ENCODE measurements at regions of chr4 and their contacts with region 1.

Region 1: DNA sequence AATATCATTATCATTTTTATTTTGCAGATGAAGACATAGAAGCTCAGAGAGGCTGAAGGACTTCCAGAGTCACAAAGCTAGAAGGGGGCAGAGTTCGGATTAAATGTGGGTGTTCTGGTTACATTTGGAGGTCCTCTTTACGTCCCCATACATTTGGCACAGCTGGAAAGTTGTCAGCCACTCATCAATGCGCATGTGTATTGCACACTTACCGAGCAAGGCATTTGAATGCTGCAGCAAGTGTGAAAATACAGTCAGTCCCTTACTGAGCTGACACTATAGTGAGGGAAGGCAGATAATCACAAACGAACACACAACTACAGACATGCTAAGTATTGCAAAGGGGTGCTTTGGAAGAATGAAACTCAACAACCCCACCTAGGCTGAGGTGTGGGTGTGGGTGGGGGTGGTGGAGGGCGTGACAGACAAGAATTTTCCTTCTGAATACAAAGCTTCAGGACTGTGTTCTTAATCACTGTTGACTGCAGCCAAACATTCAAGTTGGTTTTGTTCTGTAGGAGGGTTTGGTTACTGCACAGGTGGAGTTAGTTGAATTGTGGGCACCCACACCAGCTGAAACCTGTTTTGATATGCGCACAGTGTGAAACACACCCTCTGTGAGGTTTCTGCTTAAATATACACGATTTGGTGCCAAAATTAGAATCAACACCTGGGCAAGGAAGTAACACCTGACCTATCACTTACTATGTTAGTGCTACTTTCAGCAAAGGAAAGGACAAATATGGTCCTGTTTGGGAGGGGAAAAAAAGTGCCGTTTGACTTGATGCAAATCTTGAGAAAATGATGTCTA is 72.4 kb downstream of the COQ2 start:
- DNase-seq: no peak
- H3K4me3 ChIP-seq: no peak overlapping the region
- CTCF ChIP-seq: no peak

Region 2: DNA sequence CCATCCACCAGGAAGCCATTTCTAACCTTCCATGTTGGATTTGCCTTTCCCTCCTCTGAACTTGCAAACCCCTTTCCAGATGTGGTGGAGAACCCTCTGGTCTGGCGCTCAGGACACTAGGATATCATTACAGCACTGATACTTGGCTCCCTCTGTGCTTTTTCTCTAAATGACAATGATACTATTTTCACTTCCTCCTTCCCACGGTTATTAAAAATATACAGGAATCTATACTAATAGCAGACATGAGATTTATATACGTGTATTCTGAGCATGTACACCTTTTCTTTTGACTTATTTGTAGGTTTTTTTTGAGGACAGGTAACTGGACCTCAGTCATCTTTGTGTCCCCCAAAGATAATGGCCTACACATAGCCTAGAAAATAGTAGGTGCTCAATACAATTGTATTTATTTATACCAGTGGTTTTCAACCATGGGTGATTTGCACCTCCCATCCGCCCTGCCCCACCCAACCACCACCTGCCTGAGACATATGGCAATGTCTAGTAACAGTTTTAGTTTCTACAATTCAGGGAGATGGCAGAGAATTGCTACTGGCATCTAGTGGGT is 37.3 kb before region 1 on chr4:
- in situ Hi-C with region 1: loop called (anchors 5 kb)
- DNase-seq: no peak
- H3K4me3 ChIP-seq: no peak overlapping the region
- CTCF ChIP-seq: no peak